ENCODE measurements at regions of chr6 and their contacts with region 1.

Region 1: GRCh38 chr6:161418463-161418945 is 144.6 kb upstream of the AGPAT4 start:
- DNase-seq: peak; percentile 43
- ATAC-seq: peak; percentile 80
- H3K4me3 ChIP-seq: no peak overlapping the region
- H3K27ac ChIP-seq: peak overlapping the region; percentile 48
- H3K4me1 ChIP-seq: peaks cover 16% of the 10 kb centered on the region
- H3K27me3 ChIP-seq: no peaks in the 10 kb centered on the region
- CTCF ChIP-seq: peak; percentile 74

Region 2: DNA sequence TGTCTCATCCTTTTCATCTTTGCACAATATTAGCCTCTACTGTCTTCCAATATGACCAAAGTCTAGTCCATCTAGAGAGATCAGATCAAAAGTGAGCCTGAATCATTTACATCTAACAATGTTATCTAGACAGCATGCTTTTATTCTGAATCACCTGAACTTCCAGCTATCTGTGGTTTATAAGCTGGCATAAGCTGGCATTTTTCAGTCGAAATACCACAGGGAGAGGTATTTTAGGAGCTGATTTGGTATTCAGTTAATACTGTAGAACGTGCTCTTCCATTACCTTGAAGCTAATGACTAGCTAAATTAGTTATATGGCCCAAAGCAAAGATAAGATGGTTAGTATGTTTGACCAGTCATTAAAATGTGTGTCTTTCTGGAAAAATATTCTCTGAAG is 43.6 kb after region 1 on chr6:
- CTCF ChIA-PET with region 1: no interaction called
- POLR2A ChIA-PET with region 1: no interaction called
- in situ Hi-C with region 1: no loop called
- intact Hi-C with region 1: no loop called
- DNase-seq: no peak
- ATAC-seq: 0 out of 2 replicates have a peak, but pooled peaks have one; percentile 30
- H3K4me3 ChIP-seq: no peak overlapping the region
- H3K27ac ChIP-seq: no peak overlapping the region
- H3K4me1 ChIP-seq: no peaks in the 10 kb centered on the region
- H3K27me3 ChIP-seq: no peaks in the 10 kb centered on the region
- CTCF ChIP-seq: no peak

Region 3: DNA sequence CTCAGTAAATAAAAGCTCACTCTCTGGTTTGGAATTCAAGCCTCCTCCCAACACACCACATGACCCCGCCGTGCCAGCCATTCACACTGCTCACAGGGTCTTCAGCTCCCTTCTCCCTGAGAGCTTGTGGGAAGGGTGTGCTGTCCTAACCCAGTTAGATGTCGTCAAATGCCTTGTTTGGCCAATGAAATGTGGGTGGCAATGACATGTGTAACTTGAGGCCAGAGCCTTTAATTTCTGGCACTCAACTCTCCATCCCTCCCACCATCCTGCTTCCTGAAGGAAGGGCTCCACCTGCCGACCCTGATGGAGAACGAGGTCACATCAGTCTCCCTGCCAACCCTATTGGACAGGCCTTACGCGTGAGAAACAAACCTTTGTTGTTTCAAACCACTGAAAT is 79.9 kb after region 1 on chr6:
- CTCF ChIA-PET with region 1: interaction called, 5 read pairs
- POLR2A ChIA-PET with region 1: no interaction called
- in situ Hi-C with region 1: no loop called
- intact Hi-C with region 1: loop called (anchors 5 kb)
- DNase-seq: no peak
- ATAC-seq: peak; percentile 83
- H3K4me3 ChIP-seq: no peak overlapping the region
- H3K27ac ChIP-seq: no peak overlapping the region
- H3K4me1 ChIP-seq: no peaks in the 10 kb centered on the region
- H3K27me3 ChIP-seq: no peaks in the 10 kb centered on the region
- CTCF ChIP-seq: peak; percentile 64

Region 4: DNA sequence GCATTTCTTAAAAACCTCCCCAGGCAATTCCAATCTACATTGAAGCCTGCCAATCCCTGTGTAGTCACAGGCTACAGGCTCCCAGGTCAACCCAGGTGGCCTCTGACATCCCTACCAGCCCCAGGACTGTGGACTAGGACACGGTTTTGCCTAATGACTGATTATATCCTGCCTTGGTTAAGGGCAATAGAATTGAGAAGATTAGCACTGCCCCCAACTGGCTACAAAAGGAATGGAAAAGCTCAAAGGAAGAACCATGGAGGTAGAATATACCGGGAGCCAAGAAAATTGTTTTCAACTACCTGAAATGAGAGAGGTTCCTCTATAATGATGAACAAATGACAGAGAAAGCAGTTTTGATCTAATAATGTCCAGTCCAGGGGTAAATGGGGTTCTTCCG is 276.5 kb after region 1 on chr6:
- CTCF ChIA-PET with region 1: no interaction called
- POLR2A ChIA-PET with region 1: no interaction called
- in situ Hi-C with region 1: no loop called
- intact Hi-C with region 1: loop called (anchors 10 kb)
- DNase-seq: peak; percentile 4
- ATAC-seq: no peak
- H3K4me3 ChIP-seq: no peak overlapping the region
- H3K27ac ChIP-seq: no peak overlapping the region
- H3K4me1 ChIP-seq: no peaks in the 10 kb centered on the region
- H3K27me3 ChIP-seq: no peaks in the 10 kb centered on the region
- CTCF ChIP-seq: peak; percentile 60

Region 5: DNA sequence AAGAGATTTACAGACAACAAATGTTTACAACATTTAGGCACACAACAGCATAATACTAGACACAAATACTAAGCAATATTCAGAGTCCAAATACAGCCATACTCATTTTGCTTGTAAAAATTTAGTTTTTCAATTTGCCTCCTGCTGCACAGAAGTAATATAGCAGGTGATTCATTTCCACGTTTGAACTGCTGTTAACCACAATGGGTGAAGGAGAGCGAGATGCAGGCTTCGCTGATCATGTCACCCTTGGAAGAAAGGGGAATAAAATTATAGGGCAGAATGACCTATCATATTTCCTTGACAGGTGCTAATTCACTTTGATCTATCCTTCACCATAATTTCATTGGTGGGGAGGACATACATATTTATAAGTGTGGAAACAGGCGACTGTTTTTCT is 499.1 kb after region 1 on chr6:
- CTCF ChIA-PET with region 1: no interaction called
- POLR2A ChIA-PET with region 1: no interaction called
- in situ Hi-C with region 1: no loop called
- intact Hi-C with region 1: loop called (anchors 10 kb)
- DNase-seq: no peak
- ATAC-seq: peak; percentile 69; the same call in 1 of the 2 replicates
- H3K4me3 ChIP-seq: no peak overlapping the region; a peak in 1 of 4 replicates
- H3K27ac ChIP-seq: no peak overlapping the region
- H3K4me1 ChIP-seq: peaks cover 5% of the 10 kb centered on the region
- H3K27me3 ChIP-seq: no peaks in the 10 kb centered on the region
- CTCF ChIP-seq: peak; percentile 16; the same call in 1 of the 2 replicates

Measured in Panc1 (cell line).